Posterior vena cava (tissue), 2 donors: ENCODE measurements at regions of chr13 and their contacts with region 1.

Region 1: DNA sequence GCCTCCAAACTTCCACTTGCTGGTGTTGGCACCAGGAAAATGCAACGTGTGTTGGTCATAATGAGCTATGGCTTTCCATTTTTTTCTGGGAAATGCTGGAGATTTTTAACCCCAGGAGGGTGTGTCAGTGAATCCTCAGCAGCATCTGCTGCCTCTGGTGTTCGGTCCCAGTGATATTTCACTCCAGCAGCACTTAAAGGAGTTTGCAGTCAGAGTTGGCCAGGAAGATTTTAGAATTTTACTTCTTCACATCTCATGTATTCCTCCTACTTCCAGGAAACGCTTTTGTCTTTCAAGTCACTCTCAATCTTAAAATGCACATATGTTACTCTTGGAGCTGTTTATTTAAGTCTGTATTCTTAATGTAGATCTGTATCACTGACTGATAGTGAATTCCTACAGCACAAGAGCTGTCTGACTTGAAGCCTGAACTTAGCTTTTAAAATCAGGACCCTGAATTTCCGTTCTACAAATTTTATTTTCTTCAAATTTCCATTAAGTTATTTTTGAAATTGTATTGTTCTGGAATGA is 903.4 kb upstream of the SLC10A2 start:
- DNase-seq: no peak

Region 2: GRCh38 chr13:103839460-103839859 is 130.1 kb before region 1 on chr13:
- intact Hi-C with region 1: no loop called
- DNase-seq: no peak

Region 3: GRCh38 chr13:104160536-104160935 is 191.0 kb after region 1 on chr13:
- intact Hi-C with region 1: loop called in 1 of 2 experiments (anchors 5 kb)
- DNase-seq: no peak

Region 4: DNA sequence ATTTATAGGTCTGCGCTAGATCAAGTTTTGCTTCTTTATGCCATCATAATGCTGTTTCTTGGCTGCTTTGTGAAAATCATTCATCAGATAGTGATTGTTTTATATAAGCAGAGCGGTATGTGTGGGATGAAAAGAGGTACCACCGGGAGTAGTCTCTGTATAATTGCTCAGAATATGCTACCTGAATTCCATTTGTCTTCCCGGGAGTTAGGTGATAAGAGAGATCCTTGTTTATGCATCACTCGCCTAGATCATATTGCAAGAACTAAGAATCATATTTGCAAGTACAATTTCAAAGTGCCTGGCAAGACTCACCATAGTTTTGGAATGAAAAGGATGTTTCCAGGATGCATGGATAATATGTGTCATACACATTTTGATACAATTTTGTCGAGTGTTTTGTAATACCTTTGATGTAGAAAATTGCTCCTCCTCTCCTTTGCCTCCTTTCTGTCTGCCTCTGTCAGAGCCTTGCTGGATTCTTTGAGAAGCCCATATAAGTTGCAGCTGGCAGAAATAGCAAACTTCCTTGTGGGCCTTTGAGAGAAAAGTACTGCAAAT is 402.6 kb after region 1 on chr13:
- intact Hi-C with region 1: no loop called
- DNase-seq: no peak